Right ventricle myocardium superior (tissue), 1 donor: ENCODE measurements at regions of chr18 and their contacts with region 1.

Region 1: DNA sequence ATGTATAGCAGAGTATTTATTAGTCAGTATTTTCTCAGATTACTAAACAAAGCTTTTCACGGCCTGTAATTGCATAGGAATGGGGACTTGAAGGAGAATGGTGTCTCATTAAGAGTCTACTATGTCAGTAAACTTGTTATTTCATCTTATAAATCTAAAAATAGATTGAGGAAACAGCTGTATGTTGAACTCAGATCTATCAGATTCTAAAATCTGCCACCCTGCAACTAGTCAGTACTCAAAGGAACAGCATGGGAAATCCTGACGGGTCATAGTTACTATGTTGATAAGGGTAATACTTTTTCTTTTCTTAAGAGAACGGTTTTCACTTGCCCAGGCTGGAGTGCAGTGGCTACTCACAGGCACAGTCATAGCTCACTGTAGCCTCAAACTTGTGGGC is 70.2 kb upstream of the EMILIN2 start:
- DNase-seq: no peak
- ATAC-seq: no peak

Region 2: DNA sequence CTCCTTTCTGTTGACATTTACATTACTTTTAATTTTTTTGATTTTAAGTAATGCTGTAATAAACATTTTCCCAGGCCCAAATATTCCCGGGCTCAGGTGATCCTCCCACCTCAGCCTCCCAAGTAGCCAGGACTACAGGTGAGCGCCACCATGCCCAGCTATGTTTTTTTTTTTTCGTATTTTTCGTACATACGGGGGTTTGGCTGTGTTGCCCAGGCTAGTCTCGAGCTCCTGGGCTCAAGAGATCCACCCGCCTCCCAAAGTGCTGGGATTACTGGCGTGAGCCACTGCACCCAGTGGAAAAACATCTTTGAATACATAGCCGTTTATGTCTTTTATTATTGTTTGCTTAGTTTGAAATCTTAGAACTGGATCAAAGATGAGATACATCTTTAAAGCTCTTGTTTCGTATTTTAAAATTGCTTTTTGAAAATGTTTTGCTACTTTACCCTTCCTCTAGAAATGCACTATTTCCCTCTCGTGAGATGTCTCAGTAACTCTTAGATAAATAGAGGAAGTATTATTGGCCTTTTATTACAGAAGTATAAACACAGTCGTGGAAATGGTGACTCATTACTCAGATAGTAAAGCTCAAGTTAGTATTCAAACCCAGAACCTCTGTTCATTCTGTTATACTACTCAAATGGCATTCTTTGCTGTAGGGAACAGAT is 118.7 kb before region 1 on chr18:
- intact Hi-C with region 1: no loop called
- DNase-seq: no peak
- ATAC-seq: no peak

Region 3: DNA sequence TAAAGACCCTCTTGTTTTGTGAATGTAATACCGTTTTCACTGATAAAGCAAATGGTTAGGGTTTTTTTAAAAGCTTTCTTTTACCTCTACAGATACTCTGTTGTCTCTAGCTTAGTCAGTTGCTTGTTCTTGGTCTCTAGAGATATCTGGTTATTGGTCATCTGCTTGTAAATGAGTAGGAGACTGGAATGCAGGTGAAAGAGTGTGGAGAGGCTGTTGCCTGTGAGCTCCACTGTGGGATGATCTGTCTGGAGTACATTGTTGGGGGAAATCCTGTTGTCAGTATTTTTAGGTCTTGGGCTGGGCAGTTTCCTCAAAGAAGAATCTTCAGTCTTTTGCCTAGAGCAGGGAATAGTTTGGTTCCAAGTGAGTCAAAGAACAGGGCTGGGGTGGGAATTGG is 53.4 kb before region 1 on chr18:
- intact Hi-C with region 1: loop called (anchors 10 kb)
- DNase-seq: no peak
- ATAC-seq: no peak